Activated CD4-positive, alpha-beta memory T cell treated with anti-CD3 and anti-CD28 coated beads, Interleukin-2, amount 10 ng/mL, durations not matched to agents 7 days and 5 days (primary cell): ENCODE measurements at regions of chr2 and their contacts with region 1.

Region 1: DNA sequence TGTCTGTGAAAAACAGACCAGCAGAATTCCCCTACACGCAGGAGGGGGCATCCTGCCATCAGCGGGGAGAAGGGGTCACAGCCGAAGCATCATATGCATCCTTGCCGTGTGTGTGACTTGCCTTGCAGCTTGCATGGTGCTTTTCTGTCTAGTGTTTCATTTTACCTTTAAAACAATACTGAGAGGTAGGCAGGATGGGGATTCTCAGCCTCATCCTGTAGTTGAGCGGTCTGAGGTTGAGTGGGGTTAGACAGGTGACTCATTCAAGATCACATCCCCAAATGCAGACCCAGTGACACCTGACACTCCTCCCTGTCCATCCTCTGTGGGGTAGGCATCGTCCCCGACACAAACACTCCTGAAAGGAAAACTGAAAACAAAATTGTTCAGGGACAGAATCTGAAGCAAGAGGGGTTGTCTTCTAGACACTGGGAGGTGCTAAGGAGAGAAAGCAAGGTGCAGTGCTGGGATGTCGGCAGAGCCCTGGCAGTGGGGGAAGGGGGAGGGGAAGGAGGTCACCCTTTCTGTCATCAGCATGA is 7.9 kb downstream of the ARL4C start:
- DNase-seq: peak; percentile 87
- H3K4me3 Mint-ChIP-seq: peak overlapping the region; percentile 99
- H3K27ac Mint-ChIP-seq: peak overlapping the region; percentile 100
- H3K4me1 Mint-ChIP-seq: peaks cover 73% of the 10 kb centered on the region
- H3K27me3 Mint-ChIP-seq: no peaks in the 10 kb centered on the region

Region 2: DNA sequence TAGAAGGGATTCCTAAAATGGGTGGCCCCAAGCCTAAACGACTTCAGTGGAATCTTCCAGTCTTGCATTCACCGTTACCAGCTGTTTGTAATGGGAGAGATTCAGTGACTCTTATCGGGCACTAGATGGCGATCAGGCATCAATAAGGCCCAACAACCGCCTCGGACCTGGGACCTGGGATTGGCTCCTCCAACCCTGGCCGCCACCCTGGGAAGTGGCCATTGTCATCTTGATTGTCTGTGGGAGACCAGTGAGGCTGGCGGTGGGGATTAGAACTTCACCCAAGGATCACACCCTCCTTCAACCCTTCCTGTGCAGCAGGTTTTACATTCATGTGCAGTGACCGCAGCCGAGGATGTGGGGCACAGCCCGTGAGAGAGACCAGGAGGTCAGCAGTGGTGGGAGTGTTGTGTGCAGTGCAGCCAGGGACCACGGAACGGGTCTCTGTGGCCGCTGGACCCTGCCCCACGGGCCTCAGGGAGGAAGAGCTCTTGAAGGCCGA is 353.2 kb before region 1 on chr2:
- CTCF ChIA-PET with region 1: interaction called, 5 read pairs
- POLR2A ChIA-PET with region 1: interaction called, 18 read pairs
- DNase-seq: peak; percentile 67
- H3K4me3 Mint-ChIP-seq: no peak overlapping the region
- H3K27ac Mint-ChIP-seq: peak overlapping the region; percentile 38
- H3K4me1 Mint-ChIP-seq: peaks cover 22% of the 10 kb centered on the region
- H3K27me3 Mint-ChIP-seq: peaks cover 11% of the 10 kb centered on the region

Region 3: DNA sequence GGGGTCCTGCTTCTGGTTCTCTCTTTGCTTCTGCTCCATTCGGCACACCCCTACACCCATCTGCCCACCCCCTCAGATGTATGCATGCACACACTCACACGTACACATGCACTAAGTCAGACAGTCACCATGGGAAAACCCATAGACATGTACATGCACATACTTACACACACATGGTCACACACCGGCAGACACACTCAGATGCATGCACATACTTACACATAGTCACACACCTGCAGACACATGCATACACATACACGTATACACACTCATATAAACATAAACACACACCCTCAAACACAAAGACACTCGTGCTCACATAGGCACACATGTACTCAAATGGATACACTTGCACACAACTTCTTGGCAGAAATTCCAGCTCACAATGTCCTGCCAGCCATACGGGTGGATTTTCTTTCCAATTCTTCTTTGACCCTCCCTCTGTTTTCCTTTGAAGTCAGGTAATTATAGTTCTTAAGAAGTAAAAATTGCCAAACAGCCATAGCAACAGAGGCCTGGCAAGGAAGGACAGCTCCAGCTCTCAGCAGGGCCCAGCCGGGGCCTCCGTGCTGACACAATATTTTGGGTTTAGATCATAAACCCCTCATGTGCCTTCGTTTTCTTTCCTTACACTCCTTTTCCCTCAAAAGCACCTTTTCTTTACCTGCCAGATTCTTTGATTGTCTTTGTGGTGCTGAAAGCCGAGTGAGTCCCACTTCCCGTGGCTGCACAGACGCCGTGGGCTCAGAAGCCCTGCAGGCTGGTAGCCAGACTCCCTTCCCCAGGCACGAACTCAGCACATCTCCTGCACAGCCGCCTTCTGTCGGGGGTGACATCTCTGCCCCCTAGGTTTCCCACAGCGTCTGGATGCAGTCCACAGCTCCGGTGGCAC is 187.8 kb before region 1 on chr2:
- CTCF ChIA-PET with region 1: no interaction called
- POLR2A ChIA-PET with region 1: interaction called, 51 read pairs
- DNase-seq: no peak
- H3K4me3 Mint-ChIP-seq: no peak overlapping the region
- H3K27ac Mint-ChIP-seq: no peak overlapping the region
- H3K4me1 Mint-ChIP-seq: peaks cover 72% of the 10 kb centered on the region
- H3K27me3 Mint-ChIP-seq: no peaks in the 10 kb centered on the region

Region 4: GRCh38 chr2:234403108-234403507 is 85.9 kb before region 1 on chr2:
- CTCF ChIA-PET with region 1: interaction called, 4 read pairs
- POLR2A ChIA-PET with region 1: interaction called, 11 read pairs
- DNase-seq: no peak
- H3K4me3 Mint-ChIP-seq: no peak overlapping the region
- H3K27ac Mint-ChIP-seq: peak overlapping the region; percentile 6
- H3K4me1 Mint-ChIP-seq: peaks cover 73% of the 10 kb centered on the region
- H3K27me3 Mint-ChIP-seq: no peaks in the 10 kb centered on the region

Region 5: GRCh38 chr2:234451852-234452625 is 36.9 kb before region 1 on chr2:
- CTCF ChIA-PET with region 1: interaction called, 26 read pairs
- POLR2A ChIA-PET with region 1: interaction called, 390 read pairs
- DNase-seq: no peak
- H3K4me3 Mint-ChIP-seq: peak overlapping the region; percentile 72
- H3K27ac Mint-ChIP-seq: peak overlapping the region; percentile 81
- H3K4me1 Mint-ChIP-seq: peaks cover 83% of the 10 kb centered on the region
- H3K27me3 Mint-ChIP-seq: no peaks in the 10 kb centered on the region

Region 6: DNA sequence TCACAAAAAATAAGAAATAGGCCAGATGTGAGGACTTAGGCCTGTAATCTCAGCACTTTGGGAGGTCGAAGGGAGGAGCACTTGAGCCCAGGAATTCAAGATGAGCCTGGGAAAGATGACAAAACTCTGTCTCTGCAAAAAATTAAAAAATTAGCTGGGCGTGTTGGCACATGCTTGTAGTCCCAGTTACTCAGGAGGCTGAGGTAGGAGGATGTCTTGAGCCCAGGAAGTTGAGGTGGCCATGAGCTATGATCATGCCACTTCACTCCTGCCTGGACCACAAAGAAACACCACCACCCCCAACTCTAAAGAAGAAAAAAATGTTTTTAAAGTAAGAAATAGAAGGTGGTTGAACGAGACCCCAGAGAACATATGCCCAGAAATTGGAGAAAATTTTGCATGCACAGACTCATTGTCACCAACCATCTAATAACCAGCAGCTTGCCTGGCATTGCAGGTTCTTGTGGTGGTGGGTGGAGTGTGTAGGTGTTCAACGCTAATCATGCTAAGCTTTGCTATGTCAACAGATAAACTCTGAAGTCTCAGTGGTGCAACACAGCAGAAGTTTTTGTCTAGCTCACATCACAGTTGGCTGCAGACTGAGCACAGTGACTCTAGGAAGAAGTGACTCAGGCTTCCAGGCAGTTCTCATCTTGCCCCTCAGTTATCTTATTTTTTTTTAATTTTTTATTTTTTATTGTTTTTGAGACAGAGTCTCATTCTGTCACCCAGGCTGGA is 10.7 kb before region 1 on chr2:
- CTCF ChIA-PET with region 1: no interaction called
- POLR2A ChIA-PET with region 1: interaction called, 51 read pairs
- DNase-seq: no peak
- H3K4me3 Mint-ChIP-seq: no peak overlapping the region
- H3K27ac Mint-ChIP-seq: peak overlapping the region; percentile 80
- H3K4me1 Mint-ChIP-seq: peaks cover 74% of the 10 kb centered on the region
- H3K27me3 Mint-ChIP-seq: no peaks in the 10 kb centered on the region

Region 7: DNA sequence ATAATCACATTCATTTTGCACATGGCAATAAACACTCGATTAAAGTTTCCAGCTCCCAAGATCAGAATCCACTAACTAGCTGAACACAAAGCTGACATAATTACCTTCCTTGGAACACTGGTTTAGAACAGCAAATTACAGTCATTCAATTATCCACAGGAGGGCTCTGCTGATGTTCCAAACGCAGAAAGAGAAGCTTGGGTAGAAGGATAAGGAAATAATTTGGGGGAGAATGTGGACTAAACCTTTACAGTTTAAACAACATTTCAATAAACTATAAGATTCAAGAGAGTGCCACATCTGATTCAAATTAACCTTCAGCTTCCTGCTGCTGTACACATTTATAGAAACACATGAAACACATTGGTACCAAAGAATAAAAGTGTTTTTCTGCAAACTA is 75.7 kb after region 1 on chr2:
- CTCF ChIA-PET with region 1: no interaction called
- POLR2A ChIA-PET with region 1: no interaction called
- DNase-seq: no peak
- H3K4me3 Mint-ChIP-seq: no peak overlapping the region
- H3K27ac Mint-ChIP-seq: no peak overlapping the region
- H3K4me1 Mint-ChIP-seq: no peaks in the 10 kb centered on the region
- H3K27me3 Mint-ChIP-seq: peaks cover 12% of the 10 kb centered on the region